ENCODE measurements at regions of chr12 and their contacts with region 1.

Region 1: DNA sequence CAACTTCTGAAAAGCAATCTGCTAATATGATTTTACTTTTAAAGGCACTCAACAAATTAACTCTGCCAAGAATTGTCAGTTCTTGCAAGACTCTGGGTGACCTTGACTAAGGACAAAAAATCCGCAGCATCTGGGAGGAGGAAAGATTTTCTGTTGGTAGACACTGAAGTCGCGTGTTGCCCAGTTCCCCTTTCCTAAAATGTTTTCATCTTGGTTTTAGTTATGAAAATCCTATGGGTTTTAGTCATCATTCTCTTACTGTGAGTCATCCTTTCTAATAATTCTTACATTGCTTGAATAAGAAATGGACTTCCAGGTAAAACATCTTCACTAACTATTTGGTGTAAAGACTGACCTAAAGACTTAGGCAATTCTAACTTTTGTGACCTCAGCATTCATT is 9.1 kb downstream of the GSG1 start:
- DNase-seq: no peak
- H3K4me3 Mint-ChIP-seq: no peak overlapping the region
- H3K27ac Mint-ChIP-seq: no peak overlapping the region
- H3K4me1 Mint-ChIP-seq: peaks cover 18% of the 10 kb centered on the region
- H3K27me3 Mint-ChIP-seq: peaks cover 8% of the 10 kb centered on the region

Region 2: DNA sequence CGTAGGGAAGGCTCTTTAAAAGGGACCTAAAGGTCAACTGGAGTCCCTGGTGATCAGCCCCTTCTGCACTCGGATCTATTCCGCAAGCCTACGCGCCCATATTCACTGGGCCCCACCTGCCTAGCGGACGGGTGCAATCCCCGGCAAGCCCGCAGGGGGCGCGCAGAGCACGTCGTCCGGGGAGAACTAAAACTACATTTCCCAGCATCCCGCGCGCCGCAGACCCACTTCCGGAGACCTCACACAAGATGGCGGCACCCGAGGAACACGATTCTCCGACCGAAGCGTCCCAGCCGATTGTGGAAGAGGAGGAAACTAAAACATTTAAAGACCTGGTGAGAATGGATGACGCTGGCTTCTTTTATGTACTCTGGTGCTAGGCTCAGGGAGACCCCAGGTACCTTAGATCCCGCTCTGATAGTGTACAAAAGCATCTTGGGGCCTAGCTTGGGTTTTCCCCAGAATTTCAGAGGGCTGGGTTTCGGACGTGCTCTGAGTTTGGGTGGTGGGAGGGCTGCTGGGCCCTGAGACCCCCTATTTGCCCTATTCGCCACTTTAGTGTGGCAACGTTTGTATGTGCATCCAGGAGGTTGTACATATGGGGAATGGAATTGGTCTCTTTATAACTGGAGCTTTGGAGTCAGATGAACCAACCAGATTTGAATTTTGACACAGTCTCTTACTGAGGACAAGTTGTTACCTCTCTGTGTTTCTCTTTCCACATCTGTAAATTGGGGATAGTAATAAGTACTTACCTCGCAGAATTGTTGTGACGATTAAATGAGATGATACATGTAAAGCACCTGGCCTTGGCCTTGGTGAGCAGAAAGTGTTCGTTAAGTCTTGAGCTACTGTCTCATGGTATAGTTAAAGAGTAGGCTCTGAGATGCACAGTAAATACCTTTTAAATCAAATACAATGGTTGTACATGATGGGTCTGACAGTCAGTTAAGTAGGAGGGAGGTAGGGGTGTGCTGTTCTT is 280.9 kb before region 1 on chr12 and contains the start of gene DDX47:
- intact Hi-C with region 1: no loop called
- DNase-seq: peak; percentile 93
- H3K4me3 Mint-ChIP-seq: peak within 1 kb of the TSS; percentile 90
- H3K27ac Mint-ChIP-seq: peak within 1 kb of the TSS; percentile 92
- H3K4me1 Mint-ChIP-seq: peaks cover 43% of the 10 kb centered on the region
- H3K27me3 Mint-ChIP-seq: no peaks in the 10 kb centered on the region
- total RNA-seq, gene DDX47: 114 and 120 TPM in 2 replicates

Region 3: GRCh38 chr12:13044002-13044905 is 50.1 kb before region 1 on chr12 and contains the start of gene FAM234B:
- intact Hi-C with region 1: loop called (anchors 10 kb)
- DNase-seq: peak; percentile 56
- H3K4me3 Mint-ChIP-seq: peak within 1 kb of the TSS; percentile 82
- H3K27ac Mint-ChIP-seq: no peak within 1 kb of the TSS
- H3K4me1 Mint-ChIP-seq: peaks cover 2% of the 10 kb centered on the region
- H3K27me3 Mint-ChIP-seq: peaks cover 26% of the 10 kb centered on the region
- total RNA-seq, gene FAM234B: 5.7 and 6.8 TPM in 2 replicates

Region 4: GRCh38 chr12:13223179-13223859 is 129.0 kb after region 1 on chr12:
- intact Hi-C with region 1: no loop called
- DNase-seq: no peak
- H3K4me3 Mint-ChIP-seq: no peak overlapping the region
- H3K27ac Mint-ChIP-seq: no peak overlapping the region
- H3K4me1 Mint-ChIP-seq: no peaks in the 10 kb centered on the region
- H3K27me3 Mint-ChIP-seq: peaks cover 40% of the 10 kb centered on the region

Measured in activated T-helper 2 cell treated with anti-CD3 and anti-CD28 coated beads, Interferon-gamma antibody, Interleukin-2, Interleukin-4, amounts not matched to agents 10 μg/mL and 5 μg/mL and 100 μg/mL, durations not matched to agents 14 hours and 24 hours and 36 hours (primary cell).